GM12878 (cell line): ENCODE measurements at regions of chr17 and their contacts with region 1.

Region 1: GRCh38 chr17:56939901-56940343 is 20.9 kb downstream of the COIL start:
- DNase-seq: no peak
- ATAC-seq: peak; percentile 95
- H3K4me3 ChIP-seq: no peak overlapping the region
- H3K27ac ChIP-seq: no peak overlapping the region
- H3K4me1 ChIP-seq: no peaks in the 10 kb centered on the region
- H3K27me3 ChIP-seq: no peaks in the 10 kb centered on the region
- CTCF ChIP-seq: peak; percentile 69 to 75 (median 74)
- EP300 ChIP-seq: no peak
- POLR2A ChIP-seq: no peak
- RAD21 ChIP-seq: peak; percentile 92

Region 2: DNA sequence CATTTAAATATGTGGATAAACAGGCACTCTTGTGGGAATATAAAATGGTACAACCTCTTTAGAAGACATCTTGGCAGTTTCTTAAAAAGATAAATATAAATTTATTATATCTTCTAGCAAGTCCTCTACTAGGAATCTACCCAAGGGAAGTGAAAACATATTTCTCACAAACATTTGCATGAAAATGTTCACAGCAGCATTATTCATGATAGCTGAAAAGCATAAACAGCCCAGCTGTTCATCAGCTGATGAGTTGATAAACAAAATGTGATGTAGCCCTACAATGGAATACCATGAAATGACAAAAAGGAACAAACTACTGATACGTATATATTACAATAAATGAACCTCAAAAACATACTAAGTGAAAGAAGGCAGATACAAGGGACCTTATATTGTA is 94.0 kb before region 1 on chr17:
- CTCF ChIA-PET with region 1: interaction called, 12 read pairs
- POLR2A ChIA-PET with region 1: no interaction called
- RAD21 ChIA-PET with region 1: interaction called, 3 read pairs
- SMC1A ChIA-PET with region 1: interaction called, 6 read pairs
- in situ Hi-C with region 1: no loop called
- intact Hi-C with region 1: no loop called
- DNase-seq: no peak
- ATAC-seq: peak; percentile 57
- H3K4me3 ChIP-seq: no peak overlapping the region
- H3K27ac ChIP-seq: peak overlapping the region; percentile 33; the same call in 1 of the 2 replicates
- H3K4me1 ChIP-seq: peaks cover 14% of the 10 kb centered on the region
- H3K27me3 ChIP-seq: no peaks in the 10 kb centered on the region
- CTCF ChIP-seq: no peak
- EP300 ChIP-seq: no peak
- POLR2A ChIP-seq: no peak
- RAD21 ChIP-seq: no peak

Region 3: GRCh38 chr17:56908001-56908542 is 31.9 kb before region 1 on chr17:
- CTCF ChIA-PET with region 1: interaction called, 5 read pairs
- POLR2A ChIA-PET with region 1: no interaction called
- RAD21 ChIA-PET with region 1: interaction called, 3 read pairs
- SMC1A ChIA-PET with region 1: interaction called, 15 read pairs
- in situ Hi-C with region 1: no loop called
- intact Hi-C with region 1: no loop called
- DNase-seq: peak; percentile 60
- ATAC-seq: peak; percentile 88
- H3K4me3 ChIP-seq: peak overlapping the region; percentile 79; the same call in 1 of the 2 replicates
- H3K27ac ChIP-seq: peak overlapping the region; percentile 42
- H3K4me1 ChIP-seq: peaks cover 24% of the 10 kb centered on the region
- H3K27me3 ChIP-seq: no peaks in the 10 kb centered on the region
- CTCF ChIP-seq: no peak
- EP300 ChIP-seq: no peak
- POLR2A ChIP-seq: no peak
- RAD21 ChIP-seq: no peak

Region 4: DNA sequence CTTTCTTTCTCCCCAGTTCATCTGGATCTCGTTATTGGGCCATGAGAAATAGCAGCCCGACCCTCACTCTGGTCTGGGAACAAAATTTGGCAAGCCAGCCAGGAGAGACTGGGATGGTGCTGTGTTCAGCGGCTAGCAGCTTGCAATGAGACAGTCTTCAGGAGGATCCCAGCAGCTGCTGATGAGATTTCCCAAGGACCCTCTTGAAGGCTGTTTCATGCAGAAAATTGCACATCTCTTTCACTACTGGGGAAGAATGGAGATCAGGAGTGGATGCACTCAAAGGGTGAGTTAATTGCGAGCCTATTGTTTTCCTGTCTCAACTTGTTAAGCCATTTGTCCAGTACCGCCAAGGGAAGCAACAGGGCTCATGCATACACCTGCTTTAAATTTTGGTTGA is 26.4 kb after region 1 on chr17:
- CTCF ChIA-PET with region 1: no interaction called
- POLR2A ChIA-PET with region 1: no interaction called
- RAD21 ChIA-PET with region 1: no interaction called
- SMC1A ChIA-PET with region 1: no interaction called
- in situ Hi-C with region 1: no loop called
- intact Hi-C with region 1: no loop called
- DNase-seq: no peak
- ATAC-seq: no peak
- H3K4me3 ChIP-seq: no peak overlapping the region
- H3K27ac ChIP-seq: no peak overlapping the region
- H3K4me1 ChIP-seq: no peaks in the 10 kb centered on the region
- H3K27me3 ChIP-seq: no peaks in the 10 kb centered on the region
- CTCF ChIP-seq: no peak
- EP300 ChIP-seq: no peak
- POLR2A ChIP-seq: no peak
- RAD21 ChIP-seq: no peak